ENCODE measurements at regions of chr12 and their contacts with region 1.

Region 1: GRCh38 chr12:49496417-49497360 is 42.1 kb upstream of the KCNH3 start:
- DNase-seq: peak in 1 of 2 experiments; percentile 57
- ATAC-seq: peak; percentile 78 to 82; a peak in 5 of 6 replicates
- H3K4me3 ChIP-seq: peak overlapping the region; percentile 17; the same call in 2 of the 3 replicates
- H3K27ac ChIP-seq: peak overlapping the region; percentile 74 to 81
- H3K4me1 ChIP-seq: peaks cover 39% of the 10 kb centered on the region
- CTCF ChIP-seq: no peak
- EP300 ChIP-seq: 0 out of 5 replicates have a peak, but pooled peaks have one; percentile 0 to 30
- POLR2A ChIP-seq: no peak
- RAD21 ChIP-seq: no peak

Region 2: DNA sequence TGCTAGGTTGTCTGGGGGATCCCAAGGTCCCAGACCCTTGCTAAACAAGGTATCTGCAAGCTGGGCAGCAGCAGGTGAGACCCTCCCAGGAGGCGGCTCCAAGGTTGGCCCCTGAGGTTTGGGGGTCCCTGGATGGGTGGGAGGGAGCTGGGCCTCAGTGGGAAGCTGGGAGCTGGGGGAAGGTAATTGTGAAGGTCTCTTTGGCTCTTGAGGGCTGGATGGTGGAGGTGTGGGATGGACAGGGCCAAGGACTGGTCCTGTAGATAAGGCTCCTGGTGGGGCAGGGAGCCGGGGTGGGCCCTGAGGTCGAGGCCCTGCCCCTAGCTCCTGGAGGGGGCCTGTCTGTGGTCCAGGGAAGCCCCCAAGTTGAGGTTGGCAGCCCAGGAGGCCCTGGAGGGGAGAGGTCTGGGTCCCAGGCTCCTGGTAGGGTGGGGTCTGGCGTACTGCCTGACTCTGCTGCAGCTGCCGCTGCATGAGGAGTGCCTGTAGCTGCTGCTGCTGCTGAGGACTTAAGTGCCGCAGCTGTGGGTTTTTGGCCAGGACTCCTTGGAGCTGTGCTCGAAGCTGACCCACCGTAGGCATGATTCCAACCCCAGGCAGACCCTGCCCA is 465.0 kb before region 1 on chr12:
- CTCF ChIA-PET with region 1: no interaction called
- POLR2A ChIA-PET with region 1: no interaction called
- DNase-seq: no peak
- ATAC-seq: peak in 1 of 2 experiments; percentile 4; a peak in 3 of 6 replicates
- H3K4me3 ChIP-seq: no peak overlapping the region
- H3K27ac ChIP-seq: no peak overlapping the region
- H3K4me1 ChIP-seq: no peaks in the 10 kb centered on the region
- CTCF ChIP-seq: no peak
- EP300 ChIP-seq: no peak
- POLR2A ChIP-seq: no peak
- RAD21 ChIP-seq: no peak

Region 3: DNA sequence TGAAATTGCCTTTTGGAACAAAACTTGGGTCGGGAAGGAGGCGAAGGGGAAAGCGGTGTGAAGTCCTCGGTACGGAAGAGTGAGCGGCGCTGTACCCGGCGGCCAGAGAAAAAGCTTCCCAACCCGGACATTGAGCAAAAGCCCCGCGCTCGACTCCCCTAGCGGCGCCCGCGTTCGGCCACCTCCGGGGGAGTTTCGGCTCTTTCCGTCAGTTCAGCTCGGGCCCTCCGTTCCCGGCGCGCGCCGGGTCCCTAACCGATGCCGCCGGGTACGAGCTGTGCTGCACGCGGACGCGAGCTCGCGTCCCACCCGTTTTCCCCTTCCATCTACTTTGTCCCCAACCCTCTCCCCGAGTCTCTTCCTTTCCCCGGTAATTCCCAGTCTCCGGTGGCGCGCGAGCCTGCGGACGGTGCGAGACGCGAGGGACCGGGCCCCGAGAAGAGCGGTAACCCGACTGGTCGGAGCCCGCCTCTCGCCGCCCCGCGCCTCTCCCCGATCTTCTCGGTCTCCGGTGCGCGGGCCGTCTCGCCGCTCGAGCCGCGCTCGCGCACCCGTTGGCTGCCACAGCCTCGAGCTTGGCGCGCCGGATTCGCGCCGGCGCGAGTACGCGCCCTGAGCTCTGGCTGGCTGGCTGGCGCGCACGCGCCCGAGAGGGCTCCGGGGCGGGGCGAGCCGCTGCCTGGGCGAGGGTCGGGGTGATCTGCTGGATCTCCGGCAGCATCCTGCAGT is 129.9 kb before region 1 on chr12:
- CTCF ChIA-PET with region 1: no interaction called
- POLR2A ChIA-PET with region 1: interaction called, 16 read pairs
- DNase-seq: peak; percentile 95 to 97
- ATAC-seq: peak; percentile 87 to 90
- H3K4me3 ChIP-seq: peak overlapping the region; percentile 86
- H3K27ac ChIP-seq: peak overlapping the region; percentile 95 to 96
- H3K4me1 ChIP-seq: peaks cover 36% of the 10 kb centered on the region
- CTCF ChIP-seq: no peak
- EP300 ChIP-seq: no peak
- POLR2A ChIP-seq: peak; percentile 65
- RAD21 ChIP-seq: no peak

Measured in A549 (cell line).